HEK293 (cell line): ENCODE measurements at regions of chr6 and their contacts with region 1.

Region 1: GRCh38 chr6:161418463-161418945 is 144.6 kb upstream of the AGPAT4 start:
- H3K4me3 ChIP-seq: no peak overlapping the region
- H3K27ac ChIP-seq: no peak overlapping the region
- H3K4me1 ChIP-seq: no peaks in the 10 kb centered on the region
- CTCF ChIP-seq: 0 out of 2 replicates have a peak, but pooled peaks have one; percentile 23

Region 2: DNA sequence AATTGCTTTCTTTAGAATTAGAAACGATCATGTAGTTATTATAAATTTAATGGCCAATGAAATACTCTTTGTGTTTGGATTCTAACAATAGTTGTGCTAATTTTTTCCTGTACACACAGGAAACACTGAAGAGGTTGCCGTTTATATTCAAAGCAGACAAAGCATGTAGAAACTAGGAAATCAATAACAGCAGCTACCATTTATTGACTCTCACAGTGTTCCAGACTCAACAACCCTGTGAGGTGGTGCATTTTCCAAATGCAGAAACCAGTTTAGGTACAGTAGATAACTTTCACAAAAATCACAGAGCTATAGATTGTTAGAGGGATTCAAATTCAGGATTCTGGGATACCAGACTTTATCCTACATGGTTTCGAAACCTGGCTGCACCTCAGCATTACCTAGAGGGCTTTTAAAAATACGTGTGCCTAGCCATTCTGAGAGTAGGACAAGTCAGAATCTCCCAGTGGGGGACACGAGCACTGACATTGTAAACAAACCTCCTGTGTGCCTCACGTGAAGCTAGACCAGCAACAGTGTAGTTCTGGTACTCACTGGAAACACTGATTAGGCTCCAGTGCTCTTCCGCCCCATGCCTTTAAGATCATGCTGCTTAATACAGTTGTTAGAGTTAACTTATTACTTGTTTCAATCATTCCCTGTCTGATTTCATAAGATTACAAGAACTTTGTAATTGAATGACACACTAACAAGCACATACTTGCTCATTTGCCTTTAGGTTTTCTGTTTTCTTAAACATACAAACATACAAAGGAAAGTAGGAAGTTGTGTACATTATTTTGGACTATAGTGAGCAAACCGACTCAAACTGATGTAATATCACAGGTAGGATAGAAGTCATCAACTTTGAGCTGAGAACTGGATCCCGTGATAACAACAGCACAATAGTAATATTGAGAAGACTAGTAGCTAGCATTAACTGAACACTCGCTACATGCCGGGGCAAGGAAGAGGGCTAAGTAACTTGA is 361.1 kb before region 1 on chr6:
- CTCF ChIA-PET with region 1: no interaction called
- POLR2A ChIA-PET with region 1: no interaction called
- H3K4me3 ChIP-seq: no peak overlapping the region
- H3K27ac ChIP-seq: no peak overlapping the region
- H3K4me1 ChIP-seq: no peaks in the 10 kb centered on the region
- CTCF ChIP-seq: no peak

Region 3: GRCh38 chr6:161393839-161394364 is 24.6 kb before region 1 on chr6:
- CTCF ChIA-PET with region 1: interaction called, 53 read pairs
- POLR2A ChIA-PET with region 1: interaction called, 4 read pairs
- H3K4me3 ChIP-seq: no peak overlapping the region
- H3K27ac ChIP-seq: no peak overlapping the region
- H3K4me1 ChIP-seq: no peaks in the 10 kb centered on the region
- CTCF ChIP-seq: peak; percentile 49; the same call in 1 of the 2 replicates

Region 4: GRCh38 chr6:161429921-161430490 is 11.5 kb after region 1 on chr6:
- CTCF ChIA-PET with region 1: interaction called, 31 read pairs
- POLR2A ChIA-PET with region 1: no interaction called
- H3K4me3 ChIP-seq: no peak overlapping the region
- H3K27ac ChIP-seq: no peak overlapping the region
- H3K4me1 ChIP-seq: no peaks in the 10 kb centered on the region
- CTCF ChIP-seq: no peak

Region 5: GRCh38 chr6:161486361-161487216 is 68.1 kb after region 1 on chr6:
- CTCF ChIA-PET with region 1: interaction called, 10 read pairs
- POLR2A ChIA-PET with region 1: no interaction called
- H3K4me3 ChIP-seq: no peak overlapping the region
- H3K27ac ChIP-seq: no peak overlapping the region
- H3K4me1 ChIP-seq: no peaks in the 10 kb centered on the region
- CTCF ChIP-seq: no peak

Region 6: GRCh38 chr6:161522276-161522675 is 103.8 kb after region 1 on chr6:
- CTCF ChIA-PET with region 1: interaction called, 13 read pairs
- POLR2A ChIA-PET with region 1: no interaction called
- H3K4me3 ChIP-seq: no peak overlapping the region
- H3K27ac ChIP-seq: no peak overlapping the region
- H3K4me1 ChIP-seq: no peaks in the 10 kb centered on the region
- CTCF ChIP-seq: no peak

Region 7: GRCh38 chr6:161549977-161550655 is 131.6 kb after region 1 on chr6:
- CTCF ChIA-PET with region 1: interaction called, 10 read pairs
- POLR2A ChIA-PET with region 1: no interaction called
- H3K4me3 ChIP-seq: no peak overlapping the region
- H3K27ac ChIP-seq: no peak overlapping the region
- H3K4me1 ChIP-seq: no peaks in the 10 kb centered on the region
- CTCF ChIP-seq: no peak

Region 8: DNA sequence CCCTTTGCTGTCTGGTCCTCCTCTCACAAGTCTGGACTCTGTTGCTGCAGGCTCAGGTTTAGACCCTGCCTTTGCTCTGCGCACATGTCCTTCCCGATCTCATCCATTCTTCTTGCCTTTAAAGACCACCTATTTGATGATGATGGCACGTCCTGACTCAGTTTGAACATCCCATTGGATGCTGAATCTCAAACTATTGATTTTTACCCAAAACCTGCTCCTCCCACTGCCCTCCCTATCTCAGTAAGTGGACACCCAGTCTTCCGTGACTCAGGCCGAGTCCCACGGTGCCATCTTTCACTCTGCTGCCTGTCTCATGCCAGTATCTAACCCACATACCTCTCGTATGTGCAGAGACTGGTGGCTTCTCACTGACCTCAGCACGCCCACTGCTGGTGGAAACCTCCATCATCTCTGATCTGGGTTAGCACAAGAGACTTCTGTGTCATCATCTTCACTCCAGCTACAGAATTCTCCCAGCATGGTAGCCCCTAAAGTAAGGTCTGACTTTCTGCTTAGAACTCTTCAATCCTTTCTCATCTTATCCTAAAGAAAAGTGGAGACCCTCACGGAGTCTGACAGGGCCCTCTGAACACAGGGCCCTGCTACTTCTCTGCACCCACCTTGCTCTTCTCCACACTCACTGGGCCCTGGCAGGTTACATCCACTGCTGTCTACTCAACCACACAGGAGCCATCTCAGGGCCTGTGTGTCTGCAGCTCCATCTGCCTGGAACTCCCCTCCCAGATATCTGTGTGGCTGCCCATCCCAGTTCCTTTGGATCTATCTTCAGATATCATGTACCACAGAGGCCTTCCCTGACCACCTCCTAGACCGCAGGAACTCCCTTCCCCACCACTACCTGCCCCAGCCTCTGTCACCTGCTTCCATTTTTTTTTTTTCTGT is 242.4 kb after region 1 on chr6:
- CTCF ChIA-PET with region 1: no interaction called
- POLR2A ChIA-PET with region 1: no interaction called
- H3K4me3 ChIP-seq: no peak overlapping the region
- H3K27ac ChIP-seq: no peak overlapping the region
- H3K4me1 ChIP-seq: no peaks in the 10 kb centered on the region
- CTCF ChIP-seq: no peak

Region 9: GRCh38 chr6:161694995-161695394 is 276.5 kb after region 1 on chr6:
- CTCF ChIA-PET with region 1: interaction called, 20 read pairs
- POLR2A ChIA-PET with region 1: no interaction called
- H3K4me3 ChIP-seq: no peak overlapping the region
- H3K27ac ChIP-seq: no peak overlapping the region
- H3K4me1 ChIP-seq: no peaks in the 10 kb centered on the region
- CTCF ChIP-seq: no peak

Region 10: DNA sequence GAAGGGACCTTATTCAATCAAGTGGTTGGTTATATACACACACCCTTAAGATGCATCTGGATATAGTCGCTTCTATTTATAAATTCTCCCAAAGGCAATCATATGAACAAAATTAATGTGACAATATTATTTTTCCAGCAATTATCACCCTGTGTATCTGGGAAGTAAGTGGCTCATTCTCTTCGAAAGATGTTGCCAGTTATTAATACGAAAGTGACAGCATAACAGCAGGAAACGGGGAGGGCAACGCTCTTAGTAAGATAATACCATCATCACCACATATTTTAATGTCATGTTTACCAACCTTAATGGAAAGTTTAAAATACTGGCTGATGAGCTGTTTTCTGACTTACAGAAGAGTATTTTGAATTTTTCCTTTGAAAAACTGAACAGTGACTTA is 552.5 kb after region 1 on chr6:
- CTCF ChIA-PET with region 1: no interaction called
- POLR2A ChIA-PET with region 1: no interaction called
- H3K4me3 ChIP-seq: no peak overlapping the region
- H3K27ac ChIP-seq: no peak overlapping the region
- H3K4me1 ChIP-seq: no peaks in the 10 kb centered on the region
- CTCF ChIP-seq: no peak

Region 11: GRCh38 chr6:162119341-162119740 is 700.8 kb after region 1 on chr6:
- CTCF ChIA-PET with region 1: no interaction called
- POLR2A ChIA-PET with region 1: no interaction called
- H3K4me3 ChIP-seq: no peak overlapping the region
- H3K27ac ChIP-seq: no peak overlapping the region
- H3K4me1 ChIP-seq: no peaks in the 10 kb centered on the region
- CTCF ChIP-seq: no peak